MCF 10A (cell line): ENCODE measurements at regions of chr11 and their contacts with region 1.

Region 1: GRCh38 chr11:6505577-6506240 is 8.6 kb downstream of the DNHD1 start:
- DNase-seq: peak; percentile 64
- H3K4me3 Mint-ChIP-seq: no peak overlapping the region
- H3K27ac Mint-ChIP-seq: no peak overlapping the region
- H3K4me1 Mint-ChIP-seq: no peaks in the 10 kb centered on the region
- H3K27me3 Mint-ChIP-seq: no peaks in the 10 kb centered on the region
- CTCF ChIP-seq: peak; percentile 52

Region 2: GRCh38 chr11:6371825-6372224 is 133.9 kb before region 1 on chr11:
- CTCF ChIA-PET with region 1: interaction called, 244 read pairs
- POLR2A ChIA-PET with region 1: no interaction called
- intact Hi-C with region 1: no loop called
- DNase-seq: no peak
- H3K4me3 Mint-ChIP-seq: no peak overlapping the region
- H3K27ac Mint-ChIP-seq: no peak overlapping the region
- H3K4me1 Mint-ChIP-seq: no peaks in the 10 kb centered on the region
- H3K27me3 Mint-ChIP-seq: peaks cover 11% of the 10 kb centered on the region
- CTCF ChIP-seq: no peak

Region 3: GRCh38 chr11:6489306-6489705 is 16.4 kb before region 1 on chr11:
- CTCF ChIA-PET with region 1: interaction called, 65 read pairs
- POLR2A ChIA-PET with region 1: interaction called, 3 read pairs
- intact Hi-C with region 1: no loop called
- DNase-seq: no peak
- H3K4me3 Mint-ChIP-seq: no peak overlapping the region
- H3K27ac Mint-ChIP-seq: no peak overlapping the region
- H3K4me1 Mint-ChIP-seq: no peaks in the 10 kb centered on the region
- H3K27me3 Mint-ChIP-seq: no peaks in the 10 kb centered on the region
- CTCF ChIP-seq: no peak

Region 4: GRCh38 chr11:6523253-6523652 is 17.5 kb after region 1 on chr11:
- CTCF ChIA-PET with region 1: interaction called, 16 read pairs
- POLR2A ChIA-PET with region 1: no interaction called
- intact Hi-C with region 1: no loop called
- DNase-seq: no peak
- H3K4me3 Mint-ChIP-seq: no peak overlapping the region
- H3K27ac Mint-ChIP-seq: peak overlapping the region; percentile 69
- H3K4me1 Mint-ChIP-seq: peaks cover 6% of the 10 kb centered on the region
- H3K27me3 Mint-ChIP-seq: no peaks in the 10 kb centered on the region
- CTCF ChIP-seq: no peak

Region 5: DNA sequence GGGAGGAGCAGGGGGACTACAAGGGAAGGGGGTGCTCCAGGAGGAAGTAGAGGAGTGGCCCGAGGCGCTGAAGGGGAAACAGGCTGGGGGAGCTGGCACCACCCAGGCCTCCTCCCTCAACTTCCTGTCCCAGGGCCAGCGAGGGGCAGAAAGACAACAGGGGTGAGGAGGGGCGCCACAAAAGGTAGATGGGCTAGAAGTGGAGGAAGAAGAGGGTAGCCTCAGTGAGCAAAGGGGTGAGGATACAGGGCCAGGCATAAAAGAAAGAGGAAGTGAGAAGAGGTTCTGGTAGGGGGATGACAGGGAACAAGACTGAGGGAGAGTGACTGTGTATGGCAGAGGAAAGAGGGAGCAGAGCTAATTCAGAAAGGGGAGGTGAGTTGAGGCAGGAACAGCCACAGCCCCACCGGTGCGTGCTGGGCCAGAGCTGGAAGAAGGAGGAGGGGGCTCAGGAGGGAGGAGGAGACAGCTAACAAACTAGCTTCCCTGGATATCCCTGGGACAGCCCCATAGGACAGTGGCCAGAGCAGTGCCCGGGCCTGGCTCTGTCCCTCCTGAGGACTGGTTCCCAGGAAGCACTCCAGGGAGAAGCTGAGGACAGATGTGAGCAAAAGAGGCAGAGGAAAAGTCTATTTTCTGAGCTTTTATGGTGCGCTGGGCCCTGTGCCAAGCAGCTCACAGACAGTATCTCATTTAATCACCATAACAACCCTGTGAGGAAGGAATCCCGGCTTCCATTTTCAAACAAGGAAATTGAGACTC is 141.4 kb after region 1 on chr11:
- CTCF ChIA-PET with region 1: no interaction called
- POLR2A ChIA-PET with region 1: no interaction called
- intact Hi-C with region 1: no loop called
- DNase-seq: no peak
- H3K4me3 Mint-ChIP-seq: no peak overlapping the region
- H3K27ac Mint-ChIP-seq: no peak overlapping the region
- H3K4me1 Mint-ChIP-seq: no peaks in the 10 kb centered on the region
- H3K27me3 Mint-ChIP-seq: no peaks in the 10 kb centered on the region
- CTCF ChIP-seq: no peak

Region 6: DNA sequence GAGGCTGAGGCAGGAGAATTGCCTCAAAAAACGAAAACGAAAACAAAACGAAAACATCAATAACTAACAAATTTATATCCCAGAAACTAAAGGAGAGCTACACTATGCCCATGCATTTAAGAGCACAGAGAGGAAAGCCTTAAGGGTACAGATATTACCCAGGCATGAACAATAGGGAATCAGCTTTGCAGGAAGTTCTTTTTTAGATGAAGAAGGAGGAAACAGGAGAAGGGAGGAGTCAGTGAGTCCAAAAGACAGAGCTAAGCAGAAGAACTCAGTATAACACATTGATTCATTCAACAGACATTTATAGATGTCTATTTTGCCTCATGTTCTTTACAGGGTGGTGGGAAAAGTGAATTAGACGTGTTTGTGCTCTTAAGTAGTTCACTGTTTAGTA is 169.2 kb after region 1 on chr11:
- CTCF ChIA-PET with region 1: no interaction called
- POLR2A ChIA-PET with region 1: no interaction called
- intact Hi-C with region 1: no loop called
- DNase-seq: no peak
- H3K4me3 Mint-ChIP-seq: no peak overlapping the region
- H3K27ac Mint-ChIP-seq: no peak overlapping the region
- H3K4me1 Mint-ChIP-seq: no peaks in the 10 kb centered on the region
- H3K27me3 Mint-ChIP-seq: no peaks in the 10 kb centered on the region
- CTCF ChIP-seq: no peak

Region 7: GRCh38 chr11:7186190-7186589 is 680.5 kb after region 1 on chr11:
- CTCF ChIA-PET with region 1: no interaction called
- POLR2A ChIA-PET with region 1: no interaction called
- intact Hi-C with region 1: no loop called
- DNase-seq: no peak
- H3K4me3 Mint-ChIP-seq: no peak overlapping the region
- H3K27ac Mint-ChIP-seq: no peak overlapping the region
- H3K4me1 Mint-ChIP-seq: no peaks in the 10 kb centered on the region
- H3K27me3 Mint-ChIP-seq: peaks cover 16% of the 10 kb centered on the region
- CTCF ChIP-seq: no peak